ENCODE measurements at regions of chr3 and their contacts with region 1.

Region 1: GRCh38 chr3:48268381-48269183 is 27.7 kb downstream of the ZNF589 start:
- DNase-seq: peak; percentile 85
- H3K4me3 Mint-ChIP-seq: peak overlapping the region; percentile 45
- H3K27ac Mint-ChIP-seq: peak overlapping the region; percentile 89
- H3K4me1 Mint-ChIP-seq: peaks cover 32% of the 10 kb centered on the region
- H3K27me3 Mint-ChIP-seq: no peaks in the 10 kb centered on the region

Region 2: GRCh38 chr3:48301020-48301796 is 32.6 kb after region 1 on chr3:
- CTCF ChIA-PET with region 1: interaction called, 4 read pairs
- POLR2A ChIA-PET with region 1: interaction called, 15 read pairs
- DNase-seq: peak; percentile 92
- H3K4me3 Mint-ChIP-seq: peak within 1 kb of the TSS; percentile 94
- H3K27ac Mint-ChIP-seq: peak within 1 kb of the TSS; percentile 97
- H3K4me1 Mint-ChIP-seq: peaks cover 37% of the 10 kb centered on the region
- H3K27me3 Mint-ChIP-seq: peaks cover 2% of the 10 kb centered on the region